WTC11 (cell line): ENCODE measurements at regions of chr1 and their contacts with region 1.

Region 1: GRCh38 chr1:209860293-209860881 is 32.6 kb downstream of the UTP25 start:
- DNase-seq: peak; percentile 89
- ATAC-seq: peak; percentile 70
- H3K4me3 Mint-ChIP-seq: no peak overlapping the region
- H3K27ac Mint-ChIP-seq: no peak overlapping the region
- H3K4me1 Mint-ChIP-seq: peaks cover 33% of the 10 kb centered on the region
- H3K27me3 Mint-ChIP-seq: no peaks in the 10 kb centered on the region
- CTCF ChIP-seq: peak; percentile 76

Region 2: GRCh38 chr1:209784265-209785169 is 75.9 kb before region 1 on chr1 and contains the start of gene C1orf74:
- CTCF ChIA-PET with region 1: no interaction called
- POLR2A ChIA-PET with region 1: no interaction called
- DNase-seq: peak; percentile 100
- ATAC-seq: peak; percentile 99
- H3K4me3 Mint-ChIP-seq: peak within 1 kb of the TSS; percentile 96
- H3K27ac Mint-ChIP-seq: peak within 1 kb of the TSS; percentile 93
- H3K4me1 Mint-ChIP-seq: peaks cover 15% of the 10 kb centered on the region; the same call in 1 of the 2 replicates
- H3K27me3 Mint-ChIP-seq: peaks cover 6% of the 10 kb centered on the region
- CTCF ChIP-seq: no peak
- total RNA-seq, gene C1orf74: 4.1 to 4.6 TPM (median 4.4 TPM) in 3 replicates

Region 3: DNA sequence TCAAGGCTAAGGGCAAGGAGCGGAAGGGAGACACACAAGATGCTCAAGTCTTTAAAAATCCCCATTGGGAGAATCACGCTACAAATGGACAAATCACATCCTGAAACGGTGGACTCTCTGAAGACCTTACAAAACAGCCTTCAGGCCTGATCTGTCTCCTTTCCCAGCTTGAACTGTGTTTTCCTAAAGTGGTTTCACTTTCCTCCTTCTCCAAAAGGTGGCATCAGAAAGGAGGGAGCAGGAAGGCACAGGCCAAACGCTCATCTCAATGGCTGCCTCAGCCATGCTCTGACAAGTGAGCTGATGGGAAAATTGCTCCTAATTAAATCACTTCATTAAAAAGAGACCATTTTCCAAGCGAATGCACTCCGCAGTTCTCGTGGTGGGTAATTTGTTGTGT is 15.1 kb after region 1 on chr1:
- CTCF ChIA-PET with region 1: interaction called, 28 read pairs
- POLR2A ChIA-PET with region 1: no interaction called
- DNase-seq: peak; percentile 25
- ATAC-seq: peak; percentile 99
- H3K4me3 Mint-ChIP-seq: no peak overlapping the region
- H3K27ac Mint-ChIP-seq: 0 out of 2 replicates have a peak overlapping the region, but pooled peaks have one; percentile 42
- H3K4me1 Mint-ChIP-seq: peaks cover 5% of the 10 kb centered on the region
- H3K27me3 Mint-ChIP-seq: no peaks in the 10 kb centered on the region; the same call in 1 of the 2 replicates
- CTCF ChIP-seq: no peak

Region 4: DNA sequence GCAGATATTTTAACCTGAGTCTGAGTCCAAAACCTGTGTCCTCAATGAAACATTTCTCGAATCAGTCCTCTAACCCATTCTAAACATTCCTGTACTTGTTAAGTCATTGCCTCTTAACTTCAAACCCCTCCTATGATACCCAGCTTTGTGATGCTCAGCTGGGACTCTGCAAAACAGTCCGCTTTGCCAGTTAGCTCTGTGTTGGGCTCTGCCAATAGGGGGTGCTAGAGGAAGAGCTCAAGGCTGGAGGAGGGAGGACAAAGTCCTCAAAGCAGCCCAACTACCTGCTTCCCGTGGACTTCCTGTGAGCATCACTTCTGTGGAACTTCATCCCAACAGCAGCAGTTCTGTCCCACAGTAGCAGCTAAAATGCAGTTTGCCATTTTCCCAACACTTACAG is 39.6 kb after region 1 on chr1:
- CTCF ChIA-PET with region 1: interaction called, 15 read pairs
- POLR2A ChIA-PET with region 1: no interaction called
- DNase-seq: peak; percentile 82
- ATAC-seq: peak; percentile 99
- H3K4me3 Mint-ChIP-seq: no peak overlapping the region
- H3K27ac Mint-ChIP-seq: no peak overlapping the region
- H3K4me1 Mint-ChIP-seq: peaks cover 2% of the 10 kb centered on the region
- H3K27me3 Mint-ChIP-seq: no peaks in the 10 kb centered on the region
- CTCF ChIP-seq: peak; percentile 69

Region 5: DNA sequence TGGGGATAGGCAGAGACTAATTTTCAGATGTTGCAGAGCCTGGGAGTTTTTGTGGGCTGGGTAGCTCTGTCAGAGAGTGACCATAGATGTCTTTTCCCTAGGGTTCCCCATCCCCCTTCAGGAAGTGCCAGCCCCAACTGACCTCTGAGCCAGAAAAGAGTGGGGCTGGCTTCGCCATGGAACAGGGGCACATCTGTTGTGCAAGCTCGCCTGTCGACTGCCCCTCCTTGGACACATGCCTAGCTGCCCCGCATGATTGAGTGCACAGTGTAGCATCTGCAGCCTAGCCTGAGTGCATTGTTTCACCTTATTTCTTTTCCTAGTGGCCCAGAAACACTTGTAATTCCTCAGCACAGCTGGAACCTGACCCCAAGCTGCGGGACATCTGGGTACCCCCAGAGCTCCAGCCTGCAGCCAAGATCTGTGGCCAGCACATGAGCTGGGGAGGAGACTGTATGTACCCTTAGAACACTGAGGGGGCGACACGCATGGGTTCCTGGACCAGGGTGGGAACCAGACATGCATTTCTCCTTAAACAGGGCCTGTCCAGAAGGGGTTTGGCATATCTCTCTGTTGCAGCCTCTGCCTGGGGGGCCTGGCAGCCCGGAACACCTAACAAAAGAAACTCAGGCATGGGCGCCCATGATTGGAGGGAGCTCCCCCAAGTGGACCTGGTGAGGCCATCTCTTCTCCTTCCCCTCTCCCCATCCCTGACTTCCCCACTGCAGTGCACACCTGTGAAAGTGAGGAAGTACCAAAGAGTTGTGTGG is 132.9 kb after region 1 on chr1:
- CTCF ChIA-PET with region 1: interaction called, 11 read pairs
- POLR2A ChIA-PET with region 1: no interaction called
- DNase-seq: no peak
- ATAC-seq: peak; percentile 22; the same call in 1 of the 2 replicates
- H3K4me3 Mint-ChIP-seq: no peak overlapping the region
- H3K27ac Mint-ChIP-seq: no peak overlapping the region
- H3K4me1 Mint-ChIP-seq: peaks cover 5% of the 10 kb centered on the region
- H3K27me3 Mint-ChIP-seq: no peaks in the 10 kb centered on the region
- CTCF ChIP-seq: no peak

Region 6: GRCh38 chr1:210031473-210031872 is 171.1 kb after region 1 on chr1:
- CTCF ChIA-PET with region 1: no interaction called
- POLR2A ChIA-PET with region 1: no interaction called
- DNase-seq: no peak
- ATAC-seq: no peak
- H3K4me3 Mint-ChIP-seq: no peak overlapping the region
- H3K27ac Mint-ChIP-seq: no peak overlapping the region
- H3K4me1 Mint-ChIP-seq: no peaks in the 10 kb centered on the region
- H3K27me3 Mint-ChIP-seq: no peaks in the 10 kb centered on the region
- CTCF ChIP-seq: no peak

Region 7: DNA sequence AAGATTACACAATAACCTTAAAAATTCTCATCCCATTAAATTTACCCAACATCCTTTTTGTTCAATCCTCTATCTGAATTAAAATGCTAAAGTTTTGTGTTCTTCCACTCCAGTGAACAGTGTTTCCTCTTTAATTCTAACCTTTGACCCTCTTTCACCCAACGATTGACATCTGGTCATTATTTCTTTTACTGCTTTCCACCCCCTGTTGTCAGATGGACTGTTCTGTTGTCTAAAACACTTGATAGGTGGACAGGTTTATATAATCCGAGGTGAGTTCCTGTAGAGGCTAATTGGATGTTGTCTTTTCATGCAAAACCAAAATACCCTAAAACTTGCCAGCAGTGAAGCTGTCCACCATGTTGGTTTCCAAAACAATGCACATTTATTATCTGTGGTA is 298.8 kb after region 1 on chr1:
- CTCF ChIA-PET with region 1: no interaction called
- POLR2A ChIA-PET with region 1: interaction called, 10 read pairs
- DNase-seq: no peak
- ATAC-seq: no peak
- H3K4me3 Mint-ChIP-seq: no peak overlapping the region
- H3K27ac Mint-ChIP-seq: no peak overlapping the region
- H3K4me1 Mint-ChIP-seq: no peaks in the 10 kb centered on the region
- H3K27me3 Mint-ChIP-seq: no peaks in the 10 kb centered on the region
- CTCF ChIP-seq: no peak